HepG2 (cell line): ENCODE measurements at regions of chr1 and their contacts with region 1.

Region 1: GRCh38 chr1:6602669-6603237 is at the start of gene KLHL21:
- DNase-seq: peak; percentile 73
- ATAC-seq: peak; percentile 60
- H3K4me3 ChIP-seq: peak within 1 kb of the TSS; percentile 77 to 93 (median 92)
- H3K27ac ChIP-seq: peak within 1 kb of the TSS; percentile 100
- H3K4me1 ChIP-seq: peaks cover 47% of the 10 kb centered on the region
- H3K27me3 ChIP-seq: no peaks in the 10 kb centered on the region; a peak in 1 of 5 replicates
- CTCF ChIP-seq: no peak
- EP300 ChIP-seq: peak in 1 of 2 experiments; percentile 45; a peak in 2 of 4 replicates
- POLR2A ChIP-seq: peak in 1 of 2 experiments; percentile 97; a peak in 2 of 4 replicates
- RAD21 ChIP-seq: peak; percentile 23; the same call in 1 of the 2 replicates
- total RNA-seq, gene KLHL21: 20.9 and 25.0 TPM in 2 replicates

Region 2: DNA sequence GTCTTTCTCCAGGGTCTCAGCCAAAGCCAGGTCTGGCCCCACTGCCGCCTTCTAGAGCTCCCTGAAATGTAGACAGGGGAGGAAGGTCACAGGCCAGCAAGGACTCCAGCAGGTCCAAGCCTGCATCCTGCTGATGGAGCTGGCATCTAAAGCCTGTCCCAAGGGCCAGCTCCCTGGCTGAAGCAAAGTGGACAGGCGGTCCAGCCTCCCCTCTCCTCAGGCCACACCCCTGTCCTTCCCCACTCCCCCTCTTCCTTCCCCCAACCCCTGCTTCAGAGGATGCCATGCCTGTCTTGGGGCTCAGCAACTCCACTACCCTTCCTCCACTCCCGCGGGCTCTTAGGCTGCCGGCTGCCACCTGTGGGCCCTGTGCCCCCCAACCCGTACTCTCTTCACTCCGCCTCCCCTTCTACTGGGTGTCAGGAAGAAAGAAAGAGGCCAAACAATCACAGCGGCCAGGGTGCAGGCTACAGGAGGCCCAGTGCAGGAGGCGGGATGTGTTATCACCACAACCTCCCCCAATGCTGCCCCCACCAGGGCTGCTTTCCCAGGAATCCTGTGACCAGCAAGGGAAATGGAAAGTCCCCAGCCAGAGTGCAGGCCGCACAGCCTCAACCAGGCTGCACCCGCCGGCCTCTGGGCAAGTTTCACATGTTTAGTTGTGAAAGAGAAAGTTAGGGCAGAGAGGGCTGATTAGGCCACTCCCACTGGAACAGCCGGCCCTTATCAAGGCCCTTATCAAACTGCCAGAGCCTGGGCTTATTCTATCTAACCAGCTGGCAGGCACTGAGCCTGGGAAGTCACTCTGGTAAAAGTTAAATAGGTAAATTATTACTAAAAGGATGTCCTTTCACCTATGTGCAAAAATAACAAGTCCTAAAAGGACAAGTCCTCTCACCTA is 243.3 kb before region 1 on chr1:
- CTCF ChIA-PET with region 1: no interaction called
- POLR2A ChIA-PET with region 1: no interaction called
- in situ Hi-C with region 1: no loop called
- intact Hi-C with region 1: no loop called
- DNase-seq: peak; percentile 93
- ATAC-seq: peak; percentile 86
- H3K4me3 ChIP-seq: peak overlapping the region; percentile 46 to 66 (median 61)
- H3K27ac ChIP-seq: peak overlapping the region; percentile 72
- H3K4me1 ChIP-seq: peaks cover 73% of the 10 kb centered on the region
- H3K27me3 ChIP-seq: no peaks in the 10 kb centered on the region
- CTCF ChIP-seq: peak; percentile 72
- EP300 ChIP-seq: peak in 1 of 2 experiments; percentile 68; a peak in 1 of 4 replicates
- POLR2A ChIP-seq: 0 out of 4 replicates have a peak, but pooled peaks of 1 of the 2 experiments have one; percentile 43
- RAD21 ChIP-seq: no peak

Region 3: DNA sequence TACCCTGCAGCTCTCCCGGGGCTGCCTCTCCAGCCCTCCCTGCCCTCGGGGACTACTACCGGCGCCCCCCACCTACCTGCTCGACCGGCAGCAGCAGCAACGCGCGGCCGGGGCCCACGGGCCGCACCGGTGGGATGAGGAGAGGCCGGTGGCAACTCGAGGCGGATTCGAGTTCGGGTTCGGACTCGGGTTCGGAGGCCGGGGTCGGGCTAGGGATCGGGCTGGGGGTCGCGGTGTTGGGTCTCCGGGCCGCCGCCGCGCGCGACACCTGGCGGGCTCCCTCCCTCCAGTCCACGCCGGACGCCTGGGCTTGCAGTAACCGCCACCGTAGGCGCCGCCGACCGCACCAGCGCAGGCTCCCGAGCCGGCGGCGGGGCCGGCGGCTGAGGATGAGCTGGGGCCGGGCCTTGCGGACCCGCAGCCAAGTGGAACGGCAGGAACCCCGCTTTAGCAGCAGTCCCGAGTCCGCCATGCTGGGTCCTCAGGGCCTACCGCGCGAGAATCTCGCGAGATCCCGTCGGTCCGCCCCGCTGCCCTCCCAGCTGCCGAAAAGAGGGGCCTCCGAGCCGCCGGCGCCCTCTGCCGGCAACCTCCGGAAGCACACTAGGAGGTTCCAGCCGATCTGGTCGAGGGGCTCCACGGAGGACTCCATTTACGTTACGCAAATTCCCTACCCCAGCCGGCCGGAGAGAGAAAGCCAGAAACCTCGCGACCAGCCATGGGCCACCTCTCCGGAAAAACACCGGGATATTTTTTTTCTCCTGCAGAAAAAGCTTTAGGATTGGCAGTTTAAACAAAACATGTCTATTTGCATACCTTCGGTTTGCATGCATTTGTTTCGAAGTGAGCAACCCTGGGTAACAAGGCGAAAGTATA is 48.5 kb before region 1 on chr1 and contains the start of gene NOL9:
- CTCF ChIA-PET with region 1: interaction called, 5 read pairs
- POLR2A ChIA-PET with region 1: interaction called, 35 read pairs
- in situ Hi-C with region 1: no loop called
- intact Hi-C with region 1: no loop called
- DNase-seq: peak; percentile 84
- ATAC-seq: peak; percentile 93
- H3K4me3 ChIP-seq: peak within 1 kb of the TSS; percentile 93 to 98 (median 96)
- H3K27ac ChIP-seq: peak within 1 kb of the TSS; percentile 64
- H3K4me1 ChIP-seq: peaks cover 20% of the 10 kb centered on the region
- H3K27me3 ChIP-seq: no peaks in the 10 kb centered on the region; a peak in 1 of 5 replicates
- CTCF ChIP-seq: peak; percentile 93
- EP300 ChIP-seq: peak in 1 of 2 experiments; percentile 17; a peak in 1 of 4 replicates
- POLR2A ChIP-seq: peak; percentile 87 to 91
- RAD21 ChIP-seq: peak; percentile 80
- total RNA-seq, gene NOL9: 20.2 and 24.7 TPM in 2 replicates

Region 4: GRCh38 chr1:6579374-6580118 is 23.2 kb before region 1 on chr1 and contains the start of gene ZBTB48:
- CTCF ChIA-PET with region 1: no interaction called
- POLR2A ChIA-PET with region 1: interaction called, 113 read pairs
- in situ Hi-C with region 1: no loop called
- intact Hi-C with region 1: loop called (anchors 2 kb)
- DNase-seq: peak; percentile 94
- ATAC-seq: peak; percentile 84
- H3K4me3 ChIP-seq: peak within 1 kb of the TSS; percentile 88 to 98 (median 91)
- H3K27ac ChIP-seq: peak within 1 kb of the TSS; percentile 84
- H3K4me1 ChIP-seq: peaks cover 57% of the 10 kb centered on the region
- H3K27me3 ChIP-seq: no peaks in the 10 kb centered on the region
- CTCF ChIP-seq: peak; percentile 45
- EP300 ChIP-seq: no peak
- POLR2A ChIP-seq: peak; percentile 74 to 90
- RAD21 ChIP-seq: no peak
- total RNA-seq, gene ZBTB48: 13.8 and 17.1 TPM in 2 replicates

Region 5: GRCh38 chr1:6613361-6614018 is 10.7 kb after region 1 on chr1 and contains the start of gene PHF13:
- CTCF ChIA-PET with region 1: no interaction called
- POLR2A ChIA-PET with region 1: interaction called, 60 read pairs
- in situ Hi-C with region 1: no loop called
- intact Hi-C with region 1: loop called (anchors 1 kb)
- DNase-seq: peak; percentile 97
- ATAC-seq: peak; percentile 92
- H3K4me3 ChIP-seq: peak within 1 kb of the TSS; percentile 84 to 97 (median 92)
- H3K27ac ChIP-seq: peak within 1 kb of the TSS; percentile 87
- H3K4me1 ChIP-seq: peaks cover 46% of the 10 kb centered on the region
- H3K27me3 ChIP-seq: no peaks in the 10 kb centered on the region; a peak in 1 of 5 replicates
- CTCF ChIP-seq: no peak
- EP300 ChIP-seq: peak in 1 of 2 experiments; percentile 34; a peak in 1 of 4 replicates
- POLR2A ChIP-seq: peak in 1 of 2 experiments; percentile 33; a peak in 2 of 4 replicates
- RAD21 ChIP-seq: no peak
- total RNA-seq, gene PHF13: 7.4 and 8.4 TPM in 2 replicates

Region 6: DNA sequence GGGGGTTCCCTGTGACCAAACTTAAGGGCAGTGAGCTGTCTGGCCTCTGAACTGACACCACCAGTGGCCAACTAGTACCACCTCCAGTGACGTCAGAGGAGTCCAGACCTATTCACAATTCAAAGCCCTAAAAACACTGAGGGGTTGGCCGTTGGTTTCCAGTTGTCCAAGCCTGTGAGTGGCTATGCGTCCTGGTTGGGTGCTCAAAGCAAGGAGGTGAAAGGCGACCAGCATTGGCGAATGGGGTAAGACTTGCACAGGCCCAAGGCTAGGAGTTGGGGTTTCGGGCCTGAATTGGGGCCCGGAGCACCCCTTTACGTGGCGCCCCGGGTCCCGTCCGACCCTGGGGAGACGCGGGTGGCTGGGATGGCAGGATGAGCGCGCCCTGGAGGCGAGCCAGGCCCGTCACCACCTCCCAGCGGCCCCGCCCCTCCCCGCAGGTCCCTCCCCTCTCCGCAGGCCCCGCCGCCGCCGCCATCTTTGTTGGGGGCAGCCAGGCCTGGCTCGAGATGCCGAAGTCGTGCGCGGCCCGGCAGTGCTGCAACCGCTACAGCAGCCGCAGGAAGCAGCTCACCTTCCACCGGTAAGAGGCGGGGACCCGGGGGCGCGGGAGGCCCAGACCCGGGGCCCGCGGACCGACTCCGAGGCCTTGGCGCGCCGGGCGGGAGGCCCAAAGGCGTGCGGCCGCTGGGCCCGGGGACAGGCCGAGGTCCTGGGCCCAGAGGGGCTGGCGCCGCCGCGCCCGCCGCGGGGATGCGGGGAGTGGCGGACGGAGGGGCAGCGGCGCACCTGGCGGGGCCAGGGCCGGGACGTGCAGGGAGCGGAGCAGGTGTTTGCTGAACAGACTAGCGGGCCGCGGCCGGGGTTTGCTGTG is 22.2 kb after region 1 on chr1 and contains the start of gene THAP3:
- CTCF ChIA-PET with region 1: no interaction called
- POLR2A ChIA-PET with region 1: interaction called, 19 read pairs
- in situ Hi-C with region 1: no loop called
- intact Hi-C with region 1: no loop called
- DNase-seq: peak; percentile 73
- ATAC-seq: peak; percentile 88
- H3K4me3 ChIP-seq: peak within 1 kb of the TSS; percentile 74 to 89 (median 88)
- H3K27ac ChIP-seq: peak within 1 kb of the TSS; percentile 73
- H3K4me1 ChIP-seq: peaks cover 31% of the 10 kb centered on the region
- H3K27me3 ChIP-seq: no peaks in the 10 kb centered on the region; a peak in 1 of 5 replicates
- CTCF ChIP-seq: peak; percentile 71
- EP300 ChIP-seq: no peak
- POLR2A ChIP-seq: peak in 1 of 2 experiments; percentile 57; a peak in 1 of 4 replicates
- RAD21 ChIP-seq: peak; percentile 18; the same call in 1 of the 2 replicates
- total RNA-seq, gene THAP3: 14.9 and 15.0 TPM in 2 replicates

Region 7: GRCh38 chr1:6634371-6635052 is 31.8 kb after region 1 on chr1:
- CTCF ChIA-PET with region 1: no interaction called
- POLR2A ChIA-PET with region 1: no interaction called
- in situ Hi-C with region 1: no loop called
- intact Hi-C with region 1: loop called (anchors 1 kb)
- DNase-seq: peak; percentile 40
- ATAC-seq: peak; percentile 83
- H3K4me3 ChIP-seq: no peak overlapping the region
- H3K27ac ChIP-seq: no peak overlapping the region
- H3K4me1 ChIP-seq: no peaks in the 10 kb centered on the region
- H3K27me3 ChIP-seq: no peaks in the 10 kb centered on the region
- CTCF ChIP-seq: peak; percentile 88
- EP300 ChIP-seq: no peak
- POLR2A ChIP-seq: peak in 1 of 2 experiments; percentile 36; a peak in 2 of 4 replicates
- RAD21 ChIP-seq: peak; percentile 82

Region 8: GRCh38 chr1:6686294-6686693 is 83.5 kb after region 1 on chr1:
- CTCF ChIA-PET with region 1: no interaction called
- POLR2A ChIA-PET with region 1: no interaction called
- in situ Hi-C with region 1: no loop called
- intact Hi-C with region 1: no loop called
- DNase-seq: no peak
- ATAC-seq: no peak
- H3K4me3 ChIP-seq: no peak overlapping the region
- H3K27ac ChIP-seq: no peak overlapping the region
- H3K4me1 ChIP-seq: peaks cover 12% of the 10 kb centered on the region
- H3K27me3 ChIP-seq: no peaks in the 10 kb centered on the region
- CTCF ChIP-seq: no peak
- EP300 ChIP-seq: no peak
- POLR2A ChIP-seq: no peak
- RAD21 ChIP-seq: no peak

Region 9: DNA sequence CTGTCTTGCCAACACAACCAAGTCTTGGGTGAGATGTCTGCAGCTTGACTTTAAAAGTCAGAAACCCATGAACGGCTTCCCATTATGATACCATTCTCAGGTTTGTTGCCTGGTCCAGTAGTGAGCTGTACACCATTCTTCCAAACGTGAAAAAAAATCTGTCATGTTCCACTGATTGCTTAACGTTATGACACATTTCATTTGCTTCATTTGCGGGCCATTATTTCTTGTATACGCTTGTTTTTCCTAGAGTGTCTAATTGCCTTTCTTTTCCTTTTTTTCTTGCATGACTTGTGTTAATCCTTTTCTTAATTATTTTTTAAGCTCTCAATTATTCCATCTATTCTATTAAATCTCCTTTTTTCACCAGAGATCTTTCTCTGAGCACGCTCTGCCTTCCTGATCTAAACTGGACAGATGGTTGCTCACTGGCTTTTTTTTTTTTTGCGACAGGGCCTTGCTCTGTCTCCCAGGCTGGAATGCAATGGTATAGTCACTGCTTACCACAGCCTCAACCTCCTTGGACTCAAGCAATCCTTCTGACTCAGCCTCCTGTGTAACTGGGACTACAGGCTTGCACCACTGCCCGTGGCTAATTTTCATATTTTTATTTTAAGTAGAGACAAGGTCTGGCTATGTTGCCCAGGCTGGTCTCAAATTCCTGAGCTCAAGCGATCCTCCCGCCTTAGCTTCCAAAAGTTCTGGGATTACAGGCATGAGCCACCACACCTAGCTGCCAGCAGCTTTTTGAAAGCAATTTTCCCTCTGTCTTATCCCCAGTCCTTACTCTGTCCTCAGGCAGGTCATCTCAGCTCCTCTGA is 150.8 kb after region 1 on chr1:
- CTCF ChIA-PET with region 1: no interaction called
- POLR2A ChIA-PET with region 1: no interaction called
- in situ Hi-C with region 1: no loop called
- intact Hi-C with region 1: no loop called
- DNase-seq: no peak
- ATAC-seq: no peak
- H3K4me3 ChIP-seq: no peak overlapping the region
- H3K27ac ChIP-seq: no peak overlapping the region
- H3K4me1 ChIP-seq: no peaks in the 10 kb centered on the region
- H3K27me3 ChIP-seq: peaks cover 0 to 15% of the 10 kb centered on the region in 2 experiments; a peak in 3 of 5 replicates
- CTCF ChIP-seq: no peak
- EP300 ChIP-seq: no peak
- POLR2A ChIP-seq: no peak
- RAD21 ChIP-seq: no peak

Region 10: DNA sequence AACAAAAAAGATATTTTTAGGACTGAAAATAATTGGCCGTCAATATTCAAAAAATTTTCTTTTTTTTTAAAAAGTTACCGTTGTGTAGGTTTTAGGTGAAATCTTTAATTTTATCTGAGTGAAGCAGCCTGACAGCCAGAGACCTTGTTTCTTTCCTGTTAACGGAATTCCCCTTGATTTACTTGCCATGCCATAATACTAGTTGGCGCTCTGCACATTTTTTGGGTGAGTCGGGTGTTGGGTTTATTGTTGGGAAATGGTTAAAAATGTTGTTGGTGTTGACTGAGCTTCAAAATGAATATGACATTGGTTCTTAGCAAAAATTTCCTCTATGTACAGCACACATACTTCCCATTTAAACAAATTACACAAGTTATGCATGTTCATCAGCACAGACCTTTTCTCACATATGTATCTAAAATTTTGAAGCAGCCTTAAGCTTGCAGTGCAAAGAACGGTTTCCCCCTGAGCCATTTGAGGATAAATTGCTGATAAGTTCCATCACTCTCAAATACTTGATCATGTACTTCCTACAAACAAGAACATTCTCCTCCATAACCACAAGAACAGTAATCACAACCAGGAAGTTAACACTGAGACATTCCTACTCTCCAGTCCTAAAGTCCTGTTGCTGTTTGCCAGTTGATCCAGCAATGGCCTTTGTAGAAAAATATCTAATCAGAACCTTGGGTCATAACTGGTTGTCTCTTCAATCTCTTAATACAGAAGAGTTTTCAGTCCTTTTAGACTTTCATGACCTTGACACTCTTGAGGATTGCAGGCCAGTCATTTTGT is 216.7 kb after region 1 on chr1:
- CTCF ChIA-PET with region 1: no interaction called
- POLR2A ChIA-PET with region 1: no interaction called
- in situ Hi-C with region 1: no loop called
- intact Hi-C with region 1: no loop called
- DNase-seq: no peak
- ATAC-seq: no peak
- H3K4me3 ChIP-seq: no peak overlapping the region
- H3K27ac ChIP-seq: no peak overlapping the region
- H3K4me1 ChIP-seq: peaks cover 59% of the 10 kb centered on the region
- H3K27me3 ChIP-seq: no peaks in the 10 kb centered on the region
- CTCF ChIP-seq: no peak
- EP300 ChIP-seq: no peak
- POLR2A ChIP-seq: no peak
- RAD21 ChIP-seq: no peak